PC-9 (cell line): ENCODE measurements at regions of chr19 and their contacts with region 1.

Region 1: GRCh38 chr19:42313096-42313839 is at the start of gene TMEM145:
- DNase-seq: peak in 1 of 2 experiments; percentile 46
- H3K4me3 ChIP-seq: peak within 1 kb of the TSS; percentile 68
- H3K27ac ChIP-seq: no peak within 1 kb of the TSS
- H3K4me1 ChIP-seq: 0 out of 2 replicates have a peak, but pooled peaks cover 4% of the 10 kb centered on the region
- H3K27me3 ChIP-seq: peaks cover 28% of the 10 kb centered on the region; the same call in 1 of the 2 replicates
- CTCF ChIP-seq: no peak; the same call in 1 of the 2 replicates
- total RNA-seq, gene TMEM145: 1.2 and 1.7 TPM in 2 replicates

Region 2: GRCh38 chr19:42333975-42334696 is 20.9 kb after region 1 on chr19:
- CTCF ChIA-PET with region 1: no interaction called
- POLR2A ChIA-PET with region 1: interaction called, 19 read pairs
- intact Hi-C with region 1: no loop called
- DNase-seq: no peak
- H3K4me3 ChIP-seq: no peak overlapping the region
- H3K27ac ChIP-seq: no peak overlapping the region
- H3K4me1 ChIP-seq: no peaks in the 10 kb centered on the region
- H3K27me3 ChIP-seq: no peaks in the 10 kb centered on the region
- CTCF ChIP-seq: no peak

Region 3: GRCh38 chr19:42683917-42684513 is 370.7 kb after region 1 on chr19:
- CTCF ChIA-PET with region 1: no interaction called
- POLR2A ChIA-PET with region 1: no interaction called
- intact Hi-C with region 1: no loop called
- DNase-seq: no peak
- H3K4me3 ChIP-seq: no peak overlapping the region
- H3K27ac ChIP-seq: no peak overlapping the region
- H3K4me1 ChIP-seq: no peaks in the 10 kb centered on the region
- H3K27me3 ChIP-seq: peaks cover 14% of the 10 kb centered on the region
- CTCF ChIP-seq: peak; percentile 92